ENCODE measurements at regions of chr7 and their contacts with region 1.

Region 1: DNA sequence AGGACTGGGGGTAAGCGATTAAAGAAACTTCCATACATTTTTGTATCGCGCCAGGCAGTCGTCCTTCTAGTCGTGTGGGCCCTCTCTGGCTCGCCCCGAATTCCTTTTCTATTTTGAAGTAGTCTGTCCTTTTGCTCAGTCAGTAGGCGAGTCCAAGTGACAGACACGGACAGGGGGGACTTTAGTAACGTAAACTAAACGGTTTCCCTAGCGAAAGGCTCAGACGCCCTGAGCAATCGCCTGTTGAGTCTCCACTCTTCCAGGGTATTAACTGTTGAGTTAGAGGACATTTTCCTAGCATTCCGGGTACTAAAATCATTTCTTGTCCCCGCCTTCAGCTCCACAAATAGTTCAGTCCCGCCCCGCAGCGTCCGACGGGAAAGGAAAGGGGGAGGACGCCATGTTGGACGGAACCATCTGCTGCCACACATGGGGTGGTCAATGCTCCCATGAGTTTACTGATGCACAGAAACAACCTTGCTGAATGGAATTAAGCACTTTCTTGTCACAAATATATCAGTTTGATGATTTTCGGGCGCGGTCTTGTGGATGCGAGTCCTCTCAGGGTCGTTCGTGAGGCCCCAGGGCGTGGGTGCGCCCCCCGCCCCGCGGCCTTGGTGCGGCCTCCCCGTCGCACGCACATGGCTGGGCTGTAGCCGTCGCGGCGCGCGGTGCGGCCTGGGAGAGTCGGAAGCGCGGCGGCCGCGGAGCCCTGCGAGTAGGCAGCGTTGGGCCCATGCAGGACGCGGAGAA is at the start of gene EIF3B:
- DNase-seq: peak; percentile 75 to 94 (median 85)
- ATAC-seq: peak; percentile 88
- H3K4me3 ChIP-seq: peak within 1 kb of the TSS; percentile 93
- H3K27ac ChIP-seq: peak within 1 kb of the TSS; percentile 100
- H3K4me1 ChIP-seq: peaks cover 24 to 48% of the 10 kb centered on the region in 2 experiments; a peak in 4 of 5 replicates
- H3K27me3 ChIP-seq: no peaks in the 10 kb centered on the region
- CTCF ChIP-seq: no peak; a peak in 1 of 6 replicates
- EP300 ChIP-seq: no peak
- POLR2A ChIP-seq: peak; percentile 34; the same call in 1 of the 2 replicates
- RAD21 ChIP-seq: no peak
- polyA plus RNA-seq, gene EIF3B: 25.9 to 57.6 TPM

Region 2: GRCh38 chr7:1579481-1580421 is 774.6 kb before region 1 on chr7:
- CTCF ChIA-PET with region 1: no interaction called
- POLR2A ChIA-PET with region 1: interaction called, 4 read pairs
- in situ Hi-C with region 1: no loop called
- intact Hi-C with region 1: loop called (anchors 2 kb)
- DNase-seq: peak; percentile 81 to 84 (median 83)
- ATAC-seq: peak; percentile 99
- H3K4me3 ChIP-seq: no peak overlapping the region
- H3K27ac ChIP-seq: no peak overlapping the region
- H3K4me1 ChIP-seq: peaks cover 9 to 24% of the 10 kb centered on the region in 2 experiments; a peak in 4 of 5 replicates
- H3K27me3 ChIP-seq: peaks cover 17 to 37% of the 10 kb centered on the region in 2 experiments; a peak in 4 of 5 replicates
- CTCF ChIP-seq: peak; percentile 89 to 92 (median 91)
- EP300 ChIP-seq: no peak
- POLR2A ChIP-seq: no peak
- RAD21 ChIP-seq: peak; percentile 84 to 88

Region 3: DNA sequence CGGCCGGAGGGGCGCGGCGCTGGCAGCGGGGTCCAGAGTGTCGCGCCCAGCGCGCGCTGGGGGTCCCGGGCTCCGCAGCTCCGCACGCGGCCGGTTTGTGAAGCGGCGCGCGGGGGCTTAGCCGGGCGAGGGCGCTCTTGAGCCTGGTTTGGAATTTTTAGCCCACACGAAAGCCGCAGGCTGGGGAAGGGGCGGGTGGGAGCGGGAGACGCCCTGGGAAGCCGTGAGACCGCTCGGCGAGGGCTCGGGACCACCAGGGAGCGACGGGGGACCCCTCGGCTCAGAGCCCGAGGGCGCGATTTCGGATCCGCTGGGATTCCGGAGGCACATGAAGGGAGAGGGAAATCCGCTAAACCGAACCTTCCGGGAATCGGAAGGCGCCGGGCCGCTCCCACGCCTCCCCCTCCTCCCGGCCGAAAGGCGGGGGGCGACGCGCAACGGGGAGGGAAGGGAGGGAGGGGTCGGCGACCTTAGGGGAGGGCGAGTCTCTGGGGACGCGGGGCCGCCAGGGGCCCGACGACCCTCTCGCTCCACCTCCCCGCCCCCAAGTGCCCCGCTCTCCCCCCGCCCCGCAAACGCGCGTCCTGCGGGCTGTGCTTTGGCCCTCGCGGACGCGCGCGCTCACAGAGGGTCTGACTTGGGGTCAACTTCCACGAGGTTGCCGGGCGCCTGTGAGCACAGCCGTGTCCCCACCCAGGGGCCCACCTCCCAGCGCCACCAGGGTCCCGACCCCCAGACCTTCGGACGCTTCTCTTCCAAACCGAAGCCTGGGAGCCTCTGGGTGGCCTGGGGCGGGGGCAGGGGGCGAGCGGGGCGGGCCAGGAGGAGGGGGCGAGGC is 689.4 kb before region 1 on chr7:
- CTCF ChIA-PET with region 1: no interaction called
- POLR2A ChIA-PET with region 1: no interaction called
- in situ Hi-C with region 1: no loop called
- intact Hi-C with region 1: loop called (anchors 10 kb)
- DNase-seq: peak; percentile 80 to 86 (median 82)
- ATAC-seq: peak; percentile 70
- H3K4me3 ChIP-seq: peak overlapping the region; percentile 42
- H3K27ac ChIP-seq: no peak overlapping the region
- H3K4me1 ChIP-seq: peaks cover 0 to 57% of the 10 kb centered on the region in 2 experiments; a peak in 2 of 5 replicates
- H3K27me3 ChIP-seq: peaks cover 19 to 55% of the 10 kb centered on the region in 2 experiments; a peak in 4 of 5 replicates
- CTCF ChIP-seq: peak; percentile 71 to 99 (median 97)
- EP300 ChIP-seq: no peak
- POLR2A ChIP-seq: no peak
- RAD21 ChIP-seq: peak; percentile 72

Region 4: DNA sequence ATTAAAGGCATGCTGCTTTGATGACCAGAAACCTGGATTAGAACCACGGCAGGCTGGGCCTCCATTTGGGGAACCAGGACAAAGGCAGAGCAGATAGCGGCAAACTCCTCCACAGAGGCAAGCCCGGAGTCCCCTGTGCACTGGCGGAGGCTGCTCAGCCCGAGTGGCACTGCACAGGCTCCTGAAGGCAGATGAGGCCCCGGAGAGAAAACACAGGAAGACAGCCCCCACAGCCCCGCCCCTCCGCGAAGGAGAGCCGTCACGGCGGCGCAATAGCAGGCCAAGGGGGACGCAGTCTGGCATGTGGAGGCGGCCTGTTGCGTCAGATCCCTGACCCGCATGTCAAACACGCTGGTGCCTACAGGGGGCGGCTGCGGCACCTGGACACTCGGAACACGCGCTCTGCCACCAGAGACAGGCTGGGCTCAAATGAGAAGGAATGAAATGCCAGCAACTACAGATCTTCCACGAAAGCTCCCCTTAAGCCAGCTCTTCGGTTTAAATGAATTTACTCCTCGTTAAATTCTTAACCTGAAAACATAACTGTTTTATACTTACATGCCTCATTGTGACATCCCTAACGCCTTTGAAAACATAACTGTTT is 250.2 kb before region 1 on chr7:
- CTCF ChIA-PET with region 1: no interaction called
- POLR2A ChIA-PET with region 1: no interaction called
- in situ Hi-C with region 1: no loop called
- intact Hi-C with region 1: loop called (anchors 5 kb)
- DNase-seq: peak; percentile 95 to 97 (median 96)
- ATAC-seq: peak; percentile 89
- H3K4me3 ChIP-seq: no peak overlapping the region
- H3K27ac ChIP-seq: peak overlapping the region; percentile 82
- H3K4me1 ChIP-seq: peaks cover 48 to 78% of the 10 kb centered on the region in 2 experiments
- H3K27me3 ChIP-seq: no peaks in the 10 kb centered on the region; a peak in 1 of 5 replicates
- CTCF ChIP-seq: peak; percentile 84 to 93 (median 88)
- EP300 ChIP-seq: peak; percentile 69
- POLR2A ChIP-seq: peak; percentile 65
- RAD21 ChIP-seq: peak; percentile 76 to 78

Region 5: GRCh38 chr7:2241580-2242540 is 112.5 kb before region 1 on chr7 and contains the starts of genes MRM2 and NUDT1:
- CTCF ChIA-PET with region 1: no interaction called
- POLR2A ChIA-PET with region 1: interaction called, 9 read pairs
- in situ Hi-C with region 1: loop called (anchors 5 kb)
- intact Hi-C with region 1: loop called (anchors 2 kb)
- DNase-seq: peak; percentile 89 to 93 (median 90)
- ATAC-seq: peak; percentile 95
- H3K4me3 ChIP-seq: peak within 1 kb of the TSS; percentile 100
- H3K27ac ChIP-seq: peak within 1 kb of the TSS; percentile 79
- H3K4me1 ChIP-seq: peaks cover 8 to 48% of the 10 kb centered on the region in 2 experiments; a peak in 3 of 5 replicates
- H3K27me3 ChIP-seq: no peaks in the 10 kb centered on the region
- CTCF ChIP-seq: no peak
- EP300 ChIP-seq: no peak; the same call in 1 of the 2 replicates
- POLR2A ChIP-seq: peak; percentile 91
- RAD21 ChIP-seq: no peak
- polyA plus RNA-seq, gene MRM2: 70.4 to 116 TPM
- polyA plus RNA-seq, gene NUDT1: 5.3 to 16.2 TPM

Region 6: DNA sequence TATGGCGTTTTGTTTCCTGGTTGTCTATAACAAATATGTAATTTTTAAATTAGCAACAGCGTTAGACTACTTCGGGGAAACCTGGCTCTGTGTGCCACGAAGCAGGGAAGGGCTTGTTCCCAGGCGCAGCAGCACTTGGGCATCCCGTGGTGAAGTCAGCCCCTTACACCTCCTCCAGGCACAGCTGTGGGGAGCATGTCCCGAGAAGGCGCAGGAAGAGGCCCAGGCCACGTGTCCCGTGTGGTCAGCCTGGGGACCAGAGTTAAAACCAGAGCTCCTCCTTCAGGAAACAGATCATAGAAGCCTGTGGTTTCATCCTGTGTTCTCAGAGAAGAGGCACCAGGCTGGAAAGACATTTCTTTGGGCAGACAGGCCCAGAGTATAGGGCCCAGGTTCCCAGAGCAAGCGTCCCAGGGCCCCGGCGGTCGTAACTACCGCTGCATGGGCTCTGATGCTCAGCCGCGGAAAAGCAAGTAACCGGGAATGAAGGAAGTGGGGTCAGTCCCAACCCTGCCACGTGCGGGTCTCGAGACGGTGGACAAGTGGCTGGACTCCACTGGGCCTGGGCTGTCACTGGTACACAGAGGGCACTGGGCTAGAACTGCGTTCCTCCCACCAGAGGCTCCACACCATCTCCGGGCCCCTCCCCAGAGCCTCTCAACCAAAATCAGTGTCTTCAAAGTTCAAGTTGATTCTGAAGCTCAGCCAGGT is 105.2 kb before region 1 on chr7:
- CTCF ChIA-PET with region 1: no interaction called
- POLR2A ChIA-PET with region 1: interaction called, 3 read pairs
- in situ Hi-C with region 1: loop called (anchors 5 kb)
- intact Hi-C with region 1: no loop called
- DNase-seq: peak in 2 of 4 experiments; percentile 56 to 61
- ATAC-seq: peak; percentile 71
- H3K4me3 ChIP-seq: no peak overlapping the region
- H3K27ac ChIP-seq: no peak overlapping the region
- H3K4me1 ChIP-seq: peaks cover 9 to 41% of the 10 kb centered on the region in 2 experiments; a peak in 3 of 5 replicates
- H3K27me3 ChIP-seq: no peaks in the 10 kb centered on the region
- CTCF ChIP-seq: peak in 2 of 3 experiments; percentile 9 to 37; a peak in 2 of 6 replicates
- EP300 ChIP-seq: no peak
- POLR2A ChIP-seq: no peak
- RAD21 ChIP-seq: peak; percentile 33 to 47; a peak in 3 of 4 replicates

Region 7: DNA sequence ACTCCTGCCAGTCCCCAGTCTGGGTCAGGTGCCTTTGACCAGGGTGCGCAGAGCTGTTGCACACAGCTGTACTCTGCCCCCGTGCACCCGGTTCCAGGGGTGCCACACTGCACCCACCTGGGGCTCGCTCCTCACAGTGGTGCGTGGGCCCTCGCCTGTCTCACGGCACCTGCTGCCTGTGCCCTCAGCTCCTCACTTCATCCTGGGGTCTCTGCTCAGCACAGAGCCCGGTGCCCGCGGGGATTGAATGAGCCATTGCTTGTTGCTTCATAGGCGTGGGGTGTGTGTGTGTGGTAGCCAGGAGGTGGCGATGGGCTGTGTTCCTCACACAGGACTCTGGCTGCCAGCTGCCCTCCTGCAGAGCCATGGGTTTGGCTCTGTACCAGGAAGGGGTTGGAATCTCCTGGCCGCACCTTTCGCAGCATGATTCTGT is 18.8 kb after region 1 on chr7:
- CTCF ChIA-PET with region 1: no interaction called
- POLR2A ChIA-PET with region 1: interaction called, 14 read pairs
- in situ Hi-C with region 1: no loop called
- intact Hi-C with region 1: no loop called
- DNase-seq: no peak
- ATAC-seq: no peak; the same call in 2 of the 3 replicates
- H3K4me3 ChIP-seq: no peak overlapping the region
- H3K27ac ChIP-seq: no peak overlapping the region
- H3K4me1 ChIP-seq: 0 out of 5 replicates have a peak, but pooled peaks cover 0 to 2% of the 10 kb centered on the region in 2 experiments
- H3K27me3 ChIP-seq: no peaks in the 10 kb centered on the region
- CTCF ChIP-seq: no peak
- EP300 ChIP-seq: no peak
- POLR2A ChIP-seq: no peak
- RAD21 ChIP-seq: no peak

Region 8: DNA sequence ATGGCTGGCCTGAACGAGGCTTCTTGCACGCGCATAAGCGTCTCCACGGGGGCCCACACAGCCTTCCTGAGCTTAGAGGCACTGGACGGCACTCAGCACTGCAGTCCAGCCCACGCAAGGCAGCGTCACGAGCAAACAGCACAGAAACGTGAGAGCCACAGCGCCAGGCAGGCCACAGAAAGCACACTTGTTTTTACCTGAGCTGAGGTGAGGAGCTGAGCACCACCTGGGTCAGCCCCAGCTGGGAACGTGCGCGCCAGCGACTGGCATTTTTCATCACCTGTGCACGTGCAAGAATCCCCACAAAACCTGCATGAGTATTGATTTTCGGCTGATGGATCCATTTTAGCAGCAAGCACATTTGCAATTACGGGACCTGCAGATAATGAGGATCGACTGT is 231.1 kb after region 1 on chr7:
- CTCF ChIA-PET with region 1: no interaction called
- POLR2A ChIA-PET with region 1: no interaction called
- in situ Hi-C with region 1: no loop called
- intact Hi-C with region 1: no loop called
- DNase-seq: no peak
- ATAC-seq: no peak
- H3K4me3 ChIP-seq: no peak overlapping the region
- H3K27ac ChIP-seq: no peak overlapping the region
- H3K4me1 ChIP-seq: peaks cover 0 to 18% of the 10 kb centered on the region in 2 experiments; a peak in 2 of 5 replicates
- H3K27me3 ChIP-seq: no peaks in the 10 kb centered on the region
- CTCF ChIP-seq: no peak
- EP300 ChIP-seq: no peak
- POLR2A ChIP-seq: no peak
- RAD21 ChIP-seq: no peak

Measured in K562 (cell line).